PC-9 (cell line): ENCODE measurements at regions of chr1 and their contacts with region 1.

Region 1: GRCh38 chr1:164154622-164155021 is 404.4 kb upstream of the PBX1 start:
- DNase-seq: no peak
- H3K4me3 ChIP-seq: no peak overlapping the region
- H3K27ac ChIP-seq: no peak overlapping the region
- H3K4me1 ChIP-seq: no peaks in the 10 kb centered on the region
- H3K27me3 ChIP-seq: no peaks in the 10 kb centered on the region
- CTCF ChIP-seq: no peak

Region 2: DNA sequence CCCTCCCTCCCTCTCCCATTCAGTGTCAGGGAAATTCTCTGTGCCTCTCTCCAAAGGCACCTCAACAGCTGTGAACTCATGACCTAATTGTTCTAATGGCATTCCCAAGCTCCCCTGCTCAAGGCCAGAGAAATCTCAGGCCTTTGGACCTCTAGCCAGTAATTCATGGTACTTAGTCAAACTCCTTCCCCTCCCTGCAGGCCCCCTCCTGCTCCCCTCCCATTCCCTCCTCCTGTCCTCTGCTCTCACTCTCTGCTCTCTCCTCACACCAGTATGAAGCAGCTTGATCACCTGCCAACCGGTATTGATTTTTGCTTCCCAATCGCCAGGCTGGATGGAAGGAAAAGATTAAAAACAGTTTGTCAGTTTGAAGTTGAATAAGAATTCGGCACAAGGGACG is 33.9 kb after region 1 on chr1:
- CTCF ChIA-PET with region 1: no interaction called
- POLR2A ChIA-PET with region 1: interaction called, 11 read pairs
- intact Hi-C with region 1: no loop called
- DNase-seq: no peak
- H3K4me3 ChIP-seq: no peak overlapping the region
- H3K27ac ChIP-seq: no peak overlapping the region
- H3K4me1 ChIP-seq: peaks cover 14% of the 10 kb centered on the region
- H3K27me3 ChIP-seq: no peaks in the 10 kb centered on the region
- CTCF ChIP-seq: no peak